Left cardiac atrium (tissue), 4 donors: ENCODE measurements at regions of chr13 and their contacts with region 1.

Region 1: GRCh38 chr13:101144808-101145419 is 271.4 kb downstream of the NALCN start:
- DNase-seq: no peak
- ATAC-seq: no peak

Region 2: GRCh38 chr13:100108913-100109507 is 1035.9 kb before region 1 on chr13:
- intact Hi-C with region 1: no loop called
- DNase-seq: no peak
- ATAC-seq: no peak

Region 3: DNA sequence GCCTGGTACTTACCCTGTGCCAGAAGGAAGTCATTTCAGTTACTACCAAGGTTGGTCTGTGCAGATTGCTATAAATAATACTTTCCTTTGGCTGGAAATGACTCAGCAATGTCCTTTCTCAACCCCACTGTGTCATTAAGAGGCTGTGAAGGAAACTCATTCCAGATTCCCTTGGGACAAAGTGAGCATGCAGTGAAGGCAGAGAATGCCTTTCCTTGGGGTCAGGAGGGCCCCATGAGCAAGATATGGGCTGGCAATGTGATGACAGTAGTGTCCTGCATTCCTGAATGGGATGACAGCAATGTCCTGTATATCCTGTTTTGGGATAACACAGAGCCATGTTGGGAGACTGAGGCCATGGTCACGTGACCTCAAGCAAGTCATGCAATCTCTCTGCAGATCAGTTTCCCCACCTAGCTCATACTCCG is 257.2 kb before region 1 on chr13:
- intact Hi-C with region 1: no loop called
- DNase-seq: no peak
- ATAC-seq: peak; percentile 61 to 90

Region 4: DNA sequence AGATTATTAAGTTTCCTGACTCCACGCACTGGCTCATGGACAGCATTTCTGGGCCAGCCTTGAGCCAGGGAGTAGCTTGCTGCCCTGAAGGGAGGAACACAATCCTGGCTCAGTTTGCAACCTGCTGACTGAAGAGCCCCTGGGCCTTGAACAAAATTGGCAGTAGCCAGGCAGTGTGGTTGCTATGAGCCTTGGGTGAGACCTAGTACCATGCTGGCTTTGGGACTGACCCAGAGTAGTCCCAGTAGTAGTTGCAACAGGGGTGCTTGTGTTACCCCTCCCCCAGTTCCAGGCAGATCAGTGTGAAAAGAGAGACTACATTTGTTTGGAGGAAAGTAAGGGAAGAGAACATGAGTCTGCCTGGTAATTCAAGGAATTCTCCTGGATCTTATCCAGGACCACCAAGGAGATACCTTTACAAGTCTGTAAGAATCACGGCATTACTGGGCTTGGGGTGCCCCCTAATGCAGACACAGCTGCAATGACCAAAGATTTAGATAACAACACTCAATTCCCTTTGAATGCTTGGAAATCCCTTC is 329.6 kb after region 1 on chr13:
- intact Hi-C with region 1: loop called in 1 of 2 experiments (anchors 10 kb)
- DNase-seq: no peak
- ATAC-seq: peak; percentile 46 to 78

Region 5: GRCh38 chr13:101545521-101545920 is 400.6 kb after region 1 on chr13:
- intact Hi-C with region 1: loop called in 1 of 2 experiments (anchors 10 kb)
- DNase-seq: no peak
- ATAC-seq: peak in 1 of 2 donors; percentile 63

Region 6: DNA sequence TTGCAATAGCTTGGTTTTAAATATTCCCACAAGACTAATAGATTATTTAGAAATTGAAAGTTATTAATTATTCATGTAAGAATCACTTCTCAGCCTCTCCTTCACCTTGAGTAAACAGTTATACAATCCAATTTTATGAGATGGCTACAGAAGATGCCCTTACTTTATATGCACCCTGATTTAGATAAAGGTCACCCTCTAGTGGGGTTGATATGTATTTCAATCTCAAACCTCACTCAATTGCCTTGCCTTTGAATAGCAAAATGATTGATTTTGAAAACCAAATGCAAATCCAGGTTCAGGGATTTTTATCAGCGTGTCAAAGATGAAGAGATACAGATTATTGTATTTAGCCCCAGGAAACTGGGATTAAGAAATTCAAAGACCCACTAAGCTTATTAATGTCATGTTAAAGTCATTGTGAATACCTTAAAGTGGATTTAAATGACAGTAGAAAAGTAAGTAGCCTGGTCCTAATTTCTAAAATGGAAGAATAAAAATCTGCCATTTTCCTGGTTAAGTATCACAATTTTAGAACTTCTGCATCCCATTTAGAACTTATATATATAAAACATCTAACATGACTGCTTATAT is 612.6 kb after region 1 on chr13:
- intact Hi-C with region 1: loop called in 1 of 2 experiments (anchors 2 kb)
- DNase-seq: no peak
- ATAC-seq: peak; percentile 41 to 51